Activated B cell treated with CpG ODN at 0.5 μM for 24 hours (primary cell): ENCODE measurements at regions of chr9 and their contacts with region 1.

Region 1: GRCh38 chr9:96418074-96418809 is at the start of gene ZNF367:
- DNase-seq: peak; percentile 89
- ATAC-seq: peak; percentile 76
- H3K4me3 Mint-ChIP-seq: peak within 1 kb of the TSS; percentile 93
- H3K27ac Mint-ChIP-seq: peak within 1 kb of the TSS; percentile 92
- H3K4me1 Mint-ChIP-seq: peaks cover 44% of the 10 kb centered on the region
- H3K27me3 Mint-ChIP-seq: no peaks in the 10 kb centered on the region
- CTCF ChIP-seq: no peak
- total RNA-seq, gene ZNF367: 4.0 and 4.3 TPM in 2 replicates

Region 2: DNA sequence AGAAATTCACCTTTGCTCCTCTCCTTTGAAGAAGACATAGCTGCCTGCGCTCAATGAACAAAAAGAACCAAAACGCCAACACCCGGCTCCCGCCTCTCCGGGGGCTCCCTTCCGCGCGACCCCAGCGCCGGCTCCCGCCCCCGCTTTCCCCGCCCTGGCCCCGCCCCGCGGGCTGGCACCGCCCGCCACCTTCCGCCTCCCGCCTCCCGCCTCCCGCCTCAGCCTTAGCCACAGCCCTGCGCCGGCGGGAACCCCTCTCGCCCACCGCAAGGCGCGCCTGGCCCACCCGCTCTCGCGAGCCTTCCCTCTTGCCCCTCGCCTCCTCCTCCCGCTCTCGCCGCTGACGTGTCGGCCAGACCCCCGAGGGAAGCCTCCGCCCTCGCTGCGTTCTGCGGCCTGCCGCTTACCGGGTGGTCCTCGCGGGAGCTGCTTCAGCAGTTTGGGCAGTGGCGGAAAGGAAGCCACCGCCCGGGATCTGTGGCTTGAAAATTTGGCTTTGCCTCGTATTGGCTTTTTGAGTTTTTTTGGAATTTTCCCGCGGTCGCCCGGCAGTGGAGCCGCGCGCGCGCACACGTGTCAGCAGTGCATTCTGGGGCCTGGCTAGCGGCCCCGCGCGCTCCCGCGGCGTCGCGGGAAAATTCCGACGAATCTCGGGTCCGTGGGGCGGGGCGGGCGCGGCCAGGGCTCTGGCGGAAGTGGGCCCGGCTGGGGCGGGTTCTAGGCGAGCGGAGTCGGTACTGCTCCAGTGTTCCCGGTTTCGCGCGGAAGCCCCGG is 1100.9 kb before region 1 on chr9 and contains the start of gene FANCC:
- CTCF ChIA-PET with region 1: no interaction called
- POLR2A ChIA-PET with region 1: no interaction called
- intact Hi-C with region 1: loop called (anchors 5 kb)
- DNase-seq: peak; percentile 89
- ATAC-seq: peak; percentile 84
- H3K4me3 Mint-ChIP-seq: peak within 1 kb of the TSS; percentile 92
- H3K27ac Mint-ChIP-seq: peak within 1 kb of the TSS; percentile 91
- H3K4me1 Mint-ChIP-seq: peaks cover 15% of the 10 kb centered on the region
- H3K27me3 Mint-ChIP-seq: peaks cover 10% of the 10 kb centered on the region
- CTCF ChIP-seq: no peak
- total RNA-seq, gene FANCC: 10.4 and 11.4 TPM in 2 replicates

Region 3: GRCh38 chr9:96327694-96328352 is 90.4 kb before region 1 on chr9:
- CTCF ChIA-PET with region 1: interaction called, 10 read pairs
- POLR2A ChIA-PET with region 1: interaction called, 6 read pairs
- intact Hi-C with region 1: loop called (anchors 5 kb)
- DNase-seq: no peak
- ATAC-seq: peak; percentile 73
- H3K4me3 Mint-ChIP-seq: no peak overlapping the region
- H3K27ac Mint-ChIP-seq: no peak overlapping the region
- H3K4me1 Mint-ChIP-seq: no peaks in the 10 kb centered on the region
- H3K27me3 Mint-ChIP-seq: no peaks in the 10 kb centered on the region
- CTCF ChIP-seq: peak; percentile 88

Region 4: GRCh38 chr9:96392263-96392662 is 26.0 kb before region 1 on chr9:
- CTCF ChIA-PET with region 1: no interaction called
- POLR2A ChIA-PET with region 1: no interaction called
- intact Hi-C with region 1: no loop called
- DNase-seq: no peak
- ATAC-seq: no peak
- H3K4me3 Mint-ChIP-seq: no peak overlapping the region
- H3K27ac Mint-ChIP-seq: no peak overlapping the region
- H3K4me1 Mint-ChIP-seq: no peaks in the 10 kb centered on the region
- H3K27me3 Mint-ChIP-seq: no peaks in the 10 kb centered on the region
- CTCF ChIP-seq: no peak

Region 5: DNA sequence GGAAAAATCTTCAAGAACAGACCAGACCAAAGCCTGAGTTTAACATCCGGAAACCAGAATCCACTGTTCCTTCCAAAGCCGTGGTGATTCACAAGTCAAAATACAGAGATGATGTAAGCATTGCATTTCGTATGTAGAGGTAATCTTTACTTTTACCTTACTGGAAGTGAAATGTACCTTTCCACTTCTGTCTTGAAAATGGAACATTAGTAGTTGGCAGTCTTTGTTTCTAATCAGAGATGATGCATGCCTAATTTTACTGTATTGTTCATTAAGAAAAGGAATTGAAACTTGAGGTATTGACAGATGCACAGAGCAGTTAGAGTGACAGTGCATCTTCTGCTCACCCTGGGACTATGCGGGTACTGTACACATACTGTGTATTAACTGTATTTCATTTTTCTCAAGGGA is 66.3 kb after region 1 on chr9:
- CTCF ChIA-PET with region 1: no interaction called
- POLR2A ChIA-PET with region 1: no interaction called
- intact Hi-C with region 1: loop called (anchors 1 kb)
- DNase-seq: no peak
- ATAC-seq: peak; percentile 88
- H3K4me3 Mint-ChIP-seq: no peak overlapping the region
- H3K27ac Mint-ChIP-seq: peak overlapping the region; percentile 75
- H3K4me1 Mint-ChIP-seq: peaks cover 20% of the 10 kb centered on the region
- H3K27me3 Mint-ChIP-seq: no peaks in the 10 kb centered on the region
- CTCF ChIP-seq: no peak

Region 6: GRCh38 chr9:96599298-96599697 is 181.1 kb after region 1 on chr9:
- CTCF ChIA-PET with region 1: no interaction called
- POLR2A ChIA-PET with region 1: no interaction called
- intact Hi-C with region 1: no loop called
- DNase-seq: no peak
- ATAC-seq: no peak
- H3K4me3 Mint-ChIP-seq: no peak overlapping the region
- H3K27ac Mint-ChIP-seq: no peak overlapping the region
- H3K4me1 Mint-ChIP-seq: no peaks in the 10 kb centered on the region
- H3K27me3 Mint-ChIP-seq: peaks cover 5% of the 10 kb centered on the region
- CTCF ChIP-seq: no peak

Region 7: GRCh38 chr9:96619491-96620154 is 201.4 kb after region 1 on chr9 and contains the start of gene CDC14B:
- CTCF ChIA-PET with region 1: no interaction called
- POLR2A ChIA-PET with region 1: no interaction called
- intact Hi-C with region 1: no loop called
- DNase-seq: peak; percentile 45
- ATAC-seq: peak; percentile 87
- H3K4me3 Mint-ChIP-seq: peak within 1 kb of the TSS; percentile 72
- H3K27ac Mint-ChIP-seq: no peak within 1 kb of the TSS
- H3K4me1 Mint-ChIP-seq: peaks cover 11% of the 10 kb centered on the region
- H3K27me3 Mint-ChIP-seq: peaks cover 53% of the 10 kb centered on the region
- CTCF ChIP-seq: no peak
- total RNA-seq, gene CDC14B: 1.3 and 2.5 TPM in 2 replicates

Region 8: GRCh38 chr9:96777426-96777864 is 359.2 kb after region 1 on chr9:
- CTCF ChIA-PET with region 1: no interaction called
- POLR2A ChIA-PET with region 1: no interaction called
- intact Hi-C with region 1: loop called (anchors 5 kb)
- DNase-seq: no peak
- ATAC-seq: no peak
- H3K4me3 Mint-ChIP-seq: peak overlapping the region; percentile 99
- H3K27ac Mint-ChIP-seq: peak overlapping the region; percentile 96
- H3K4me1 Mint-ChIP-seq: peaks cover 25% of the 10 kb centered on the region
- H3K27me3 Mint-ChIP-seq: no peaks in the 10 kb centered on the region
- CTCF ChIP-seq: no peak

Region 9: GRCh38 chr9:97411789-97412625 is 993.8 kb after region 1 on chr9 and contains the start of gene TDRD7:
- CTCF ChIA-PET with region 1: no interaction called
- POLR2A ChIA-PET with region 1: no interaction called
- intact Hi-C with region 1: loop called (anchors 5 kb)
- DNase-seq: peak; percentile 94
- ATAC-seq: peak; percentile 90
- H3K4me3 Mint-ChIP-seq: peak within 1 kb of the TSS; percentile 87
- H3K27ac Mint-ChIP-seq: peak within 1 kb of the TSS; percentile 78
- H3K4me1 Mint-ChIP-seq: peaks cover 38% of the 10 kb centered on the region
- H3K27me3 Mint-ChIP-seq: peaks cover 5% of the 10 kb centered on the region
- CTCF ChIP-seq: peak; percentile 43
- total RNA-seq, gene TDRD7: 13.7 and 14.7 TPM in 2 replicates